Activated T-helper 2 cell treated with anti-CD3 and anti-CD28 coated beads, Interferon-gamma antibody, Interleukin-2, Interleukin-4, amounts not matched to agents 10 μg/mL and 5 μg/mL and 100 μg/mL, durations not matched to agents 14 hours and 24 hours and 36 hours (primary cell): ENCODE measurements at regions of chr19 and their contacts with region 1.

Region 1: GRCh38 chr19:15149737-15150136 is 42.5 kb downstream of the SYDE1 start:
- DNase-seq: no peak
- H3K4me3 Mint-ChIP-seq: no peak overlapping the region
- H3K27ac Mint-ChIP-seq: no peak overlapping the region
- H3K4me1 Mint-ChIP-seq: no peaks in the 10 kb centered on the region
- H3K27me3 Mint-ChIP-seq: no peaks in the 10 kb centered on the region

Region 2: GRCh38 chr19:14979476-14980255 is 170.1 kb before region 1 on chr19 and contains the start of gene SLC1A6:
- intact Hi-C with region 1: no loop called
- DNase-seq: no peak
- H3K4me3 Mint-ChIP-seq: no peak within 1 kb of the TSS
- H3K27ac Mint-ChIP-seq: no peak within 1 kb of the TSS
- H3K4me1 Mint-ChIP-seq: no peaks in the 10 kb centered on the region
- H3K27me3 Mint-ChIP-seq: peaks cover 28% of the 10 kb centered on the region
- total RNA-seq, gene SLC1A6: not detected in 2 replicates

Region 3: GRCh38 chr19:15091901-15092753 is 57.6 kb before region 1 on chr19:
- intact Hi-C with region 1: loop called (anchors 2 kb)
- DNase-seq: peak; percentile 29
- H3K4me3 Mint-ChIP-seq: no peak overlapping the region
- H3K27ac Mint-ChIP-seq: no peak overlapping the region
- H3K4me1 Mint-ChIP-seq: peaks cover 3% of the 10 kb centered on the region
- H3K27me3 Mint-ChIP-seq: no peaks in the 10 kb centered on the region